Natural killer cell (primary cell): ENCODE measurements at regions of chr12 and their contacts with region 1.

Region 1: DNA sequence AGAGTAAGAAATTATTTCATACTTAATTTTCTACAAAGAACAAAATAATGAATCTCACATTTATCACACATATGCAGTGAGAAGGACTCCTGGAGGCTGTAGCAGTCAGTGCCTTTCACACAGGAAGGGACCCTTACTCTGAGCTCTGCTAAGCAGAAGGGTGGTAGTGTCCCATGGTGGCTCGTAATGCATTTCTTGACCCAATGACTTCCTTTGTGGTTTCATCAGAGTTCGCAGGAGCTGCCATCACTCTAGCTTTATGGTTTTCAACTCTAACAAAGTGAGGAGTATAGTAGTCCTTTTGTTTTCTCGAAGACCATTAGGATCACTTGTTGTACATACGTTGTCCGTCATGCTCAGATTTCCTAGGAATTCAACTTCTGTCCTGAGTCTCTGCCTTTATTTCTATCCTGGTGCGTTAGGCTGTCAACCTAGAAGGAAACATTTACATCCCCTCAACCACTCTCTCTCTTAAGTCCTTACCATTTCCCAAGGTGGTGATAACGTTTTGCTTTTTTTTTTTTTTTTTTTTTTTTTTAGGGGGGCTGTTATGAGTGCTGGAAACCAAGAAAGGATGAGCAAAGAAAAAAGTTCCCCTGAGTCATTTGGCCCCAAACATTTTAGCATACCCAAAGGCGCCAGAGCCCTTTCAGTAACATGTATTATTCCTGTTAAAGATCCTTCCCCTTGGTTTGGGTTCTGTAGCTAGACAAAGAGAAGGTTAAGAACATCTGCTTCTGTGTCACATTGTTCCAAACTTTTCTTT is 37.2 kb downstream of the GABARAPL1 start:
- DNase-seq: peak; percentile 50 to 63
- ATAC-seq: peak; percentile 92 to 97 (median 96)
- H3K4me3 ChIP-seq: peak overlapping the region; percentile 5
- H3K4me3 Mint-ChIP-seq: peak overlapping the region; percentile 91
- H3K27ac ChIP-seq: peak overlapping the region; percentile 73
- H3K27ac Mint-ChIP-seq: peak overlapping the region; percentile 95 to 96
- H3K4me1 ChIP-seq: peaks cover 47% of the 10 kb centered on the region
- H3K4me1 Mint-ChIP-seq: peaks cover 58 to 66% of the 10 kb centered on the region in 2 donors
- H3K27me3 ChIP-seq: no peaks in the 10 kb centered on the region
- H3K27me3 Mint-ChIP-seq: no peaks in the 10 kb centered on the region
- CTCF ChIP-seq: no peak

Region 2: DNA sequence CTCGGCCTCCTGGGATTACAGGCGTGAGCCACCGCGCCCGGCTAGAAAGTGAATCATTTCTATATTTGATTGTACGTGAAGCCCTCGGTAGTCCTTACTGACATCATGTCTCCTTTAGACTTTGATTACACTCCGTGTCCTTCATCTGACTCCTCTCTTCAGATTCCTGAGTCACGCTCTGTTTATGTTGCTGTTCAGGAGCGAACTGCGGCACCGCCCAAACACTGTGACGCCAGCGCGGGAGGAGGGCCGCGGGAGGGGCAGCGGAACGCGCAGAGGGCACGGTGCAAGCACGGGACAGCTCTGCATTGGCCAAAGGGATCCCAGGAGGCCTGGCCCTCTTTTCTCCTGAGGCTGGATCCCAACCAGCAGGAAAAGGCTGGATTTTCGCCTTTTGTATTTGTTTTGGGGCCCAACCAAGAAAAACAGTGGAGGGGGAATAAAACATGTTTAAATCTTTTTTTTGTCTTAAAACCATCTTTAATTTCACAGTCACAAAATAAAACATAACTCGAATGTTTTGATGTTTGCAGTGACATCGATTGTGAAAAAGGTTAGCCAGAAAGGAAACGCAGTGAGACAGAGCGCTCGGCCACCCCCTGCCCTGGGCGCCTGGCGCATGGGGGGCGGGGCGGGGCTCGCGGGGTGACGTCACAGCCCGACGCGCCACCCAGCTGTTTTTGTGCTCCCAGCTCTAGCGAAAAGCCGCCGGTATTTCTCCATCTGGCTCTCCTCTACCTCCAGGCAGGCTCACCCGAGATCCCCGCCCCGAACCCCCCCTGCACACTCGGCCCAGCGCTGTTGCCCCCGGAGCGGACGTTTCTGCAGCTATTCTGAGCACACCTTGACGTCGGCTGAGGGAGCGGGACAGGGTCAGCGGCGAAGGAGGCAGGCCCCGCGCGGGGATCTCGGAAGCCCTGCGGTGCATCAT is 37.4 kb before region 1 on chr12 and contains the start of gene GABARAPL1:
- intact Hi-C with region 1: loop called (anchors 1 kb)
- DNase-seq: peak; percentile 88 to 92
- ATAC-seq: peak; percentile 68 to 85 (median 72)
- H3K4me3 ChIP-seq: peak within 1 kb of the TSS; percentile 97
- H3K4me3 Mint-ChIP-seq: peak within 1 kb of the TSS; percentile 95
- H3K27ac ChIP-seq: peak within 1 kb of the TSS; percentile 99
- H3K27ac Mint-ChIP-seq: peak within 1 kb of the TSS; percentile 91 to 97
- H3K4me1 ChIP-seq: peaks cover 38% of the 10 kb centered on the region
- H3K4me1 Mint-ChIP-seq: peaks cover 32 to 34% of the 10 kb centered on the region in 2 donors
- H3K27me3 ChIP-seq: no peaks in the 10 kb centered on the region
- H3K27me3 Mint-ChIP-seq: no peaks in the 10 kb centered on the region
- CTCF ChIP-seq: no peak
- total RNA-seq, gene GABARAPL1: 157 to 233 (median 160) TPM

Region 3: GRCh38 chr12:10260927-10261326 is 11.1 kb after region 1 on chr12:
- intact Hi-C with region 1: no loop called
- DNase-seq: no peak
- ATAC-seq: no peak
- H3K4me3 ChIP-seq: no peak overlapping the region
- H3K4me3 Mint-ChIP-seq: no peak overlapping the region
- H3K27ac ChIP-seq: no peak overlapping the region
- H3K27ac Mint-ChIP-seq: no peak overlapping the region
- H3K4me1 ChIP-seq: no peaks in the 10 kb centered on the region
- H3K4me1 Mint-ChIP-seq: peaks cover 0 to 14% of the 10 kb centered on the region in 2 donors
- H3K27me3 ChIP-seq: no peaks in the 10 kb centered on the region
- H3K27me3 Mint-ChIP-seq: no peaks in the 10 kb centered on the region
- CTCF ChIP-seq: no peak

Region 4: DNA sequence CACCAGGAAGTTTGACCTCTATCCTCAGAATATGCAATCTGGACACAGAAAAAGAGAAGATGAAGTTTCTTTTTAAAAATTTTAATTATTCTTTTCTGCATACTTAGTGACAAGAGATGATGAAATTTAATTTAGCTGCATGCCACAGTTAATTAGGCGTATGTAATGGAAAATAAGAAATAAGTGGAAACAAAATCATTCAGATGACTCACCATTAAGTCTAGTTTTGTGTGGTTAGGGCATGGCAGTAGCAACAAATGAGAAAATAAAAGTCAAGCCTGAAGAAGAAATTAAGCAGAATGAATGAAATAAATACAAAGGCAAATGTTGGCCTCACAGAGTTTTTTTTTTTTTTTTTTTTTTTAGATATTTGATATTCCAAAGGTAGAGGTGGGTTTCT is 26.9 kb after region 1 on chr12:
- intact Hi-C with region 1: loop called (anchors 2 kb)
- DNase-seq: no peak
- ATAC-seq: peak in 1 of 3 donors; percentile 13
- H3K4me3 ChIP-seq: no peak overlapping the region
- H3K4me3 Mint-ChIP-seq: peak overlapping the region; percentile 45
- H3K27ac ChIP-seq: peak overlapping the region; percentile 25
- H3K27ac Mint-ChIP-seq: peak overlapping the region; percentile 72 to 73
- H3K4me1 ChIP-seq: peaks cover 22% of the 10 kb centered on the region
- H3K4me1 Mint-ChIP-seq: peaks cover 45 to 59% of the 10 kb centered on the region in 2 donors
- H3K27me3 ChIP-seq: no peaks in the 10 kb centered on the region
- H3K27me3 Mint-ChIP-seq: no peaks in the 10 kb centered on the region
- CTCF ChIP-seq: no peak

Region 5: DNA sequence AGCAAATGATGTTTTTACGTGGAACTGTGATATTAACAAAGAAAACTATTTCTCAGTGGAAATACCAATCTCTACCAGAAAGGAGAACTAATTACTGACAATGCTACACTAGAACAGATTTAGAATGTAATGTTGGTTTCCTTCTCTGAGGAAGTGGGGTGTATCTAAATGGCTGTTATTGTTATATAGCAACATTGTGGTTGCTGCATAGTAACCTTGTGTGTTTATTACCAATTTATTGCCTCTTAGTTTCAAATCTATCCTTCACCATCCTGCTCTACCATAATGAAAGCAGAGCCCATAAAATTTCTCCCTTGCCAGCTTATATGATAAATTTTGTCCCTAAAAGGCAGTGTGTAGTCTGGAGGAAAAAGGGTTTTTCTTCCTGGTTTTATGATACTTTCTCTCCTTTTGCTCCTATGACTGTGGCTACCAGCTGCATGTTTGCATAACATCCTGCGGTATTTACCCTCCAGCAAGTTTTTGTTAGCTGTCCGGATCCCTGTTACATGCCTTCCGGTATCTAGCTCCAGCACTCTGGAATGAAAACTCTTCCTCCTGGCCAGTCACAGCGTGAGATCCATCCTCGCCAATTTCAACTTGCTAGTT is 145.6 kb after region 1 on chr12:
- intact Hi-C with region 1: loop called (anchors 2 kb)
- DNase-seq: peak in 1 of 2 donors; percentile 75
- ATAC-seq: peak; percentile 52 to 82 (median 75)
- H3K4me3 ChIP-seq: peak overlapping the region; percentile 5
- H3K4me3 Mint-ChIP-seq: peak overlapping the region; percentile 87
- H3K27ac ChIP-seq: peak overlapping the region; percentile 92
- H3K27ac Mint-ChIP-seq: peak overlapping the region; percentile 97 to 98
- H3K4me1 ChIP-seq: peaks cover 42% of the 10 kb centered on the region
- H3K4me1 Mint-ChIP-seq: peaks cover 63 to 68% of the 10 kb centered on the region in 2 donors
- H3K27me3 ChIP-seq: no peaks in the 10 kb centered on the region
- H3K27me3 Mint-ChIP-seq: no peaks in the 10 kb centered on the region
- CTCF ChIP-seq: no peak